Activated CD8-positive, alpha-beta T cell treated with anti-CD3 and anti-CD28 coated beads, Interleukin-2, amount 10 ng/mL, durations not matched to agents 7 days and 5 days (primary cell): ENCODE measurements at regions of chr14 and their contacts with region 1.

Region 1: DNA sequence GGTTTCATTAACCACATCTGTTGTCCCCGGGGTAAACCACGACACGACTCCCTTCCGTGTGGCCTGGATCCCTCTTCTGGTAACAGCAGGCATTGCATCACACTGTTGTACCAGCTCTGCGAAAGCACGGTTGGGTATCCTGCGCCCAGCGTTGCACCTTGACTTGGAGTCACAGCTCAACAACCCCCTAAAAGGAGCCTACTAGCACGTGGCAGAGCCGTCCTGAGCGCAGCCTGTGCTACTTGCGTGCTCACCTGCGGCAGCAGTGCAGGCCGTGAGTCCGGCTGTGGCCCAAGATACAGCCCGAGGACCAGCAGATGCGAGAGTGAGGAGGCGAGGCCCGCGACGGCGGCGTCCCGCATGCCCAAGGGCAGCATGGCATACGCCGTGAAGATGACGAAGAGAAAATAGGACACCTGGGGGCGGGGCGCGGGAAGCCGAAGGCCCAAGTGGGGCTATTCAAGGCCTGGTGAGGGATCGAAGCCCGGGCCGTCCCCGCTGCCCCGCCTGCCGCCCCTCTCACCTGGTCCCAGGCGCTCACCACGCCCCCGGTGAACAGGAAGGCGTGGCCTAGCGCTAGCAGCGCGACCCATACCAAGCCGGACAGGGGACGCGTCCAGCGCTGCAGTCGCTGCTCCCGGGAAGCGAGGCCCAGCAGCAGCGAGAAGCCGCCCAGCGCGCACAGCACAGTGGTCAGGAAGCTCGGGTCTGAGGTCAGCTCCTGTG is 2.4 kb downstream of the ADCY4 start:
- DNase-seq: peak; percentile 94
- ATAC-seq: peak; percentile 79
- H3K4me3 Mint-ChIP-seq: peak overlapping the region; percentile 75
- H3K27ac Mint-ChIP-seq: peak overlapping the region; percentile 61
- H3K4me1 Mint-ChIP-seq: peaks cover 73% of the 10 kb centered on the region
- H3K27me3 Mint-ChIP-seq: peaks cover 22% of the 10 kb centered on the region

Region 2: DNA sequence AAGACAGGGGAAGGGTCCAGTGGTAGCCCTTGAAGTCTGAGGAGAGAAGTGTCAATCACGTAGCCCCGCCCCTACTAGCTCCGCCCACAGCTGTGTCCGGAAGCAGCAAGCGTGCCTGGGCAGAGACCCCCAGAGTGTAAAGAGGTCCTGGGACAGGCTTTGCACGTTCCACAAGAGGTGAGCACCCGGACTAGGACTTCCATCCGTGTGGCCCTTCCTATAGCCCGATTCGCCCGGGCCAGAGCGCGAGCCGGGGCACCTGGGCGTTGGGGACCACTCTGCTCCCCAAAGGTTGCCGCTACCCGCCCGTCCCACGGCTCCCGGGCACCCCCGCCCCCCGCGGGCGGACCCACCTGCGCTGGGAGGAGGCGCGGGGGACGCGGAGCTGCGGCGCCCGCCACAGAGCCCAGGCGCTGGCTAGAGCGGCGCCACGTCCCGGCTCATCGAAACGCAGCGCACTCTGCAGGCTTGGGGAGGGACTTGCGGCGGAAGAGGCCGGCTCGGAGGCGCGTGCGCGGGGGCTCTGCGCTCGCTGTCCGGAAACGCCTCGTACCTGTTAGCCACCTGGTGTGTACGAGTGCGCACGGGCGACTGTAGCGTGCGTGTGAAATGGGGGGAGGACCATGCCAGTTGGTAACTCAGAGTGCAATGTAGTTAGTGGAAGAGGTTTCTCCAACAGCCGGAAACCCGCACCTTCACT is 61.1 kb before region 1 on chr14 and contains the start of gene RABGGTA:
- CTCF ChIA-PET with region 1: interaction called, 10 read pairs
- POLR2A ChIA-PET with region 1: no interaction called
- DNase-seq: peak; percentile 93
- ATAC-seq: peak; percentile 94
- H3K4me3 Mint-ChIP-seq: peak within 1 kb of the TSS; percentile 90
- H3K27ac Mint-ChIP-seq: peak within 1 kb of the TSS; percentile 91
- H3K4me1 Mint-ChIP-seq: peaks cover 47% of the 10 kb centered on the region
- H3K27me3 Mint-ChIP-seq: no peaks in the 10 kb centered on the region
- total RNA-seq, gene RABGGTA: 47.7 to 51.8 TPM

Region 3: DNA sequence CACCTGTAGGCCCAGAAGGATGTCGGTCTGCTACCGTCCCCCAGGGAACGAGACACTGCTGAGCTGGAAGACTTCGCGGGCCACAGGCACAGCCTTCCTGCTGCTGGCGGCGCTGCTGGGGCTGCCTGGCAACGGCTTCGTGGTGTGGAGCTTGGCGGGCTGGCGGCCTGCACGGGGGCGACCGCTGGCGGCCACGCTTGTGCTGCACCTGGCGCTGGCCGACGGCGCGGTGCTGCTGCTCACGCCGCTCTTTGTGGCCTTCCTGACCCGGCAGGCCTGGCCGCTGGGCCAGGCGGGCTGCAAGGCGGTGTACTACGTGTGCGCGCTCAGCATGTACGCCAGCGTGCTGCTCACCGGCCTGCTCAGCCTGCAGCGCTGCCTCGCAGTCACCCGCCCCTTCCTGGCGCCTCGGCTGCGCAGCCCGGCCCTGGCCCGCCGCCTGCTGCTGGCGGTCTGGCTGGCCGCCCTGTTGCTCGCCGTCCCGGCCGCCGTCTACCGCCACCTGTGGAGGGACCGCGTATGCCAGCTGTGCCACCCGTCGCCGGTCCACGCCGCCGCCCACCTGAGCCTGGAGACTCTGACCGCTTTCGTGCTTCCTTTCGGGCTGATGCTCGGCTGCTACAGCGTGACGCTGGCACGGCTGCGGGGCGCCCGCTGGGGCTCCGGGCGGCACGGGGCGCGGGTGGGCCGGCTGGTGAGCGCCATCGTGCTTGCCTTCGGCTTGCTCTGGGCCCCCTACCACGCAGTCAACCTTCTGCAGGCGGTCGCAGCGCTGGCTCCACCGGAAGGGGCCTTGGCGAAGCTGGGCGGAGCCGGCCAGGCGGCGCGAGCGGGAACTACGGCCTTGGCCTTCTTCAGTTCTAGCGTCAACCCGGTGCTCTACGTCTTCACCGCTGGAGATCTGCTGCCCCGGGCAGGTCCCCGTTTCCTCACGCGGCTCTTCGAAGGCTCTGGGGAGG is 21.5 kb before region 1 on chr14 and contains the start of gene LTB4R:
- CTCF ChIA-PET with region 1: interaction called, 142 read pairs
- POLR2A ChIA-PET with region 1: interaction called, 5 read pairs
- DNase-seq: peak; percentile 77
- ATAC-seq: peak; percentile 89
- H3K4me3 Mint-ChIP-seq: peak within 1 kb of the TSS; percentile 72
- H3K27ac Mint-ChIP-seq: peak within 1 kb of the TSS; percentile 94
- H3K4me1 Mint-ChIP-seq: peaks cover 84% of the 10 kb centered on the region
- H3K27me3 Mint-ChIP-seq: no peaks in the 10 kb centered on the region
- total RNA-seq, gene LTB4R: 26.9 to 28.0 TPM

Region 4: DNA sequence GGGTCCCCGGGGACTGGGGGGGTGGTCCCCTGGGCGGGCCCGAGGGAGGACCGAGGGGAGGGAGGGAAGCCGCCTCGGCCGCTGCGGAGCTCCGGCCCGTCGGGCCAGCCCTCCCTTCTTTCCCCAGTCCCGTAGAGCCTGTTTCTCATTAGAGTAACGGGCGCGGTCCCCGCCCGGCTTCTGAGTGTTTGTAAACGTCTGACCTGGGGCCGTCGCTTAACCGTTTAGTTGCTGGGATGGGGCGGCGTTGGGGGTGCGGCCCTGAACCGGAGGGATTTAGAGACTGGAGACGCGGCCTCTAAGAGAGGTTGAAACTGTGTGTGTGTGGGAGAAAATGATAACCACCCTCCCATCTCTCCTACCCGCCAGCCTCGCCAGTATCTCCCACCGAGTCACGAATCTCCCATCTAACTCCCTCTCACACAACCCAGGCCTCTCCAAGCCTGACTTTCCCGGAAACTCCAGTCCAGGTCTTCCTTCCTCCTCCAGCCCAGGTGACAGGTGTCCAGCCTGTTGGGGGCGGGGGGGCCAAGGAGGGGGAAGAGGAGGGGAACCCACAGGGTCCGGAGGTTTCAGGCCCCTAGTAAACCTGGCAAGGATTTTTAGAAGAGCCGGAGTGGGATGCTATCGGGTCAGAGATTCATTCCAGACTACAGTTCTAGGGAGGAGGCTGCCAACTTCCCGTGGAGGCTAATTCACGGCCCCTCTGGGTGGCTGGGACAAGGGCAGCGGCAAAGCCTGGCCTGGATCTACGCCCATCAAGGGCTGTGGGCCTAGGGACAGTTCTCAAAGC is 34.5 kb after region 1 on chr14:
- CTCF ChIA-PET with region 1: interaction called, 35 read pairs
- POLR2A ChIA-PET with region 1: no interaction called
- DNase-seq: no peak
- ATAC-seq: peak; percentile 25
- H3K4me3 Mint-ChIP-seq: peak overlapping the region; percentile 12
- H3K27ac Mint-ChIP-seq: no peak overlapping the region
- H3K4me1 Mint-ChIP-seq: peaks cover 31% of the 10 kb centered on the region
- H3K27me3 Mint-ChIP-seq: peaks cover 50% of the 10 kb centered on the region

Region 5: GRCh38 chr14:24411443-24412389 is 79.3 kb after region 1 on chr14:
- CTCF ChIA-PET with region 1: interaction called, 10 read pairs
- POLR2A ChIA-PET with region 1: no interaction called
- DNase-seq: peak; percentile 47
- ATAC-seq: peak; percentile 73
- H3K4me3 Mint-ChIP-seq: no peak overlapping the region
- H3K27ac Mint-ChIP-seq: no peak overlapping the region
- H3K4me1 Mint-ChIP-seq: no peaks in the 10 kb centered on the region
- H3K27me3 Mint-ChIP-seq: no peaks in the 10 kb centered on the region

Region 6: GRCh38 chr14:24442273-24443052 is 110.0 kb after region 1 on chr14 and contains the start of gene SDR39U1:
- CTCF ChIA-PET with region 1: interaction called, 709 read pairs
- POLR2A ChIA-PET with region 1: interaction called, 16 read pairs
- DNase-seq: peak; percentile 99
- ATAC-seq: peak; percentile 91
- H3K4me3 Mint-ChIP-seq: peak within 1 kb of the TSS; percentile 96
- H3K27ac Mint-ChIP-seq: peak within 1 kb of the TSS; percentile 98
- H3K4me1 Mint-ChIP-seq: peaks cover 53% of the 10 kb centered on the region
- H3K27me3 Mint-ChIP-seq: no peaks in the 10 kb centered on the region
- total RNA-seq, gene SDR39U1: 47.6 to 58.6 TPM

Region 7: DNA sequence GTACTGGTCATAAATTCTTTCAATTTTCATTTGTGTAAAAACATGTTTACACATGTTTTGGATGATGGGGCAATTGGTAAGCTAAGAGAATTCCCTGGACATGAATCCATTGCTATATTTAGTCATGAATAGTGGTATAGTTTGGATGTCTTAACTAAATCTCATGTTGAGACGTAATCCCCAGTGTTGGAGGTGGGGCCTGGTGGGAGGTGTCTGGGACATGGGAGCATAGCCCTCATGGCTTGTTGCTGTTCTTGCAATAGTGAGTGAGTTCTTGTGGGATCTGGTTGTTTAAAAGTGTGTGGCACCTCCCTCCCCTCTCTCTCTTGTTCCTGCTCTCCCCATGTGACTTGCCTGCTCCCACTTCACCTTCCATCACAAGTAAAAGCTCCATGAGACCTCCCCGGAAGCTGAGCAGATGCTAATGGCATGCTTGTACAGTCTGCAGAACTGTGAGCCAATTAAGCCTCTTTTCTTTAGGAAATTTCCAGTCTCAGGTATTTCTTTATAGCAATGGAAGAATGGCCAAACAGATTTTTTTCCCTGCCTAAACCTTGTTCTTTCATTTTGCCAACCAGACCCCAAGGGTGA is 210.0 kb after region 1 on chr14:
- CTCF ChIA-PET with region 1: no interaction called
- POLR2A ChIA-PET with region 1: no interaction called
- DNase-seq: no peak
- ATAC-seq: no peak
- H3K4me3 Mint-ChIP-seq: no peak overlapping the region
- H3K27ac Mint-ChIP-seq: no peak overlapping the region
- H3K4me1 Mint-ChIP-seq: no peaks in the 10 kb centered on the region
- H3K27me3 Mint-ChIP-seq: peaks cover 36% of the 10 kb centered on the region

Region 8: DNA sequence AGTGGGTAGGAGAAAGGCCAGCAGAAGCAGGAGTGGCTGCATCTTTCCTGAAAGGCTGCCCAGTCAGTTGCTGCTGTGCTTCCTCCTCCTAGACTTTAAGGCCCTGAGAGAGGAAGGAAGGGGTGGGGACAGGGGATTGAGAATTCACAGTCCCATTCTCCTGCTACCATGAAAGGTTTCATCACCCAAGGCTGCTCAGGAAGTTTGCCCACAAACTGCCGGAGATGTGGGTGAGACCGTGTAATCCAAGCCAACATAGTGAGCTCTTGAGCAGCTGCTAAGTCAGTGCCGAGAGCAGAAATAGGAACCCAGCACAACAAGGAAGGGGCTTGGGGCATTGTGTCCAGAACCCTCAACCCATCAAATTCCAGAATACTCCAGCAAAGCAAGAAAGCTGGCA is 243.8 kb after region 1 on chr14 and contains the start of gene CTSG:
- CTCF ChIA-PET with region 1: no interaction called
- POLR2A ChIA-PET with region 1: no interaction called
- DNase-seq: no peak
- ATAC-seq: no peak
- H3K4me3 Mint-ChIP-seq: no peak within 1 kb of the TSS
- H3K27ac Mint-ChIP-seq: peak within 1 kb of the TSS; percentile 16
- H3K4me1 Mint-ChIP-seq: peaks cover 11% of the 10 kb centered on the region
- H3K27me3 Mint-ChIP-seq: peaks cover 20% of the 10 kb centered on the region
- total RNA-seq, gene CTSG: 0.32 to 0.47 TPM